Activated T-helper 1 cell treated with anti-CD3 and anti-CD28 coated beads, Interleukin-12 subunit alpha, Interleukin-12 subunit beta, Interleukin-2, Interleukin-4 antibody, amounts not matched to agents 30 ng/mL and 10 ng/mL and 1 ng/mL, durations not matched to agents 14 hours and 24 hours and 36 hours (primary cell): ENCODE measurements at regions of chr17 and their contacts with region 1.

Region 1: DNA sequence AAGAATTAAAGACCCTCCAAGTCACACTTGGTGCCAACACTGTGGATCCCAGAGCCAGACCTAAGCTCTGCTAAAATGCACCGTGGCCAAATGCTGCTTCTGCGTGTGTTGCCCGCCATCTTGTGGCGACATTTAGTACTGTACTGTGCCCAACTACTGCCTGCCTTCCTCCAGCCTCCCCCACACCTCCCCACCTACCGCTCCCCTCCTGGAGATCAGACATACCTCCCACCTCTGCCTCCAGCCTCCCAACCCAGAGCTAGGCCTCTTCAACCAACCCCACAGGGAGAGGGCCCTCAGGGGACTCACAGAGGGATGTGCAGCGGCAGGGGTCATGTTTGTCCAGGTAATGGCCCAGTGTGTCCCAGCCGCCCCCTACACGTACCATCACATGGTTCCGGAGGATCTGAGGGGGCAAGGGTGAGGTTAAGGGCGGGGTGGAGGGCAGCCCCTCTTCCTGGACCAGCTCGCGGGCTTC is 5.5 kb downstream of the GAS2L2 start:
- DNase-seq: peak; percentile 64
- H3K4me3 Mint-ChIP-seq: no peak overlapping the region
- H3K27ac Mint-ChIP-seq: no peak overlapping the region
- H3K4me1 Mint-ChIP-seq: peaks cover 13% of the 10 kb centered on the region
- H3K27me3 Mint-ChIP-seq: peaks cover 37% of the 10 kb centered on the region

Region 2: GRCh38 chr17:34998205-34998604 is 749.4 kb before region 1 on chr17:
- intact Hi-C with region 1: loop called (anchors 1 kb)
- DNase-seq: peak; percentile 77
- H3K4me3 Mint-ChIP-seq: no peak overlapping the region
- H3K27ac Mint-ChIP-seq: peak overlapping the region; percentile 11
- H3K4me1 Mint-ChIP-seq: peaks cover 21% of the 10 kb centered on the region
- H3K27me3 Mint-ChIP-seq: no peaks in the 10 kb centered on the region

Region 3: DNA sequence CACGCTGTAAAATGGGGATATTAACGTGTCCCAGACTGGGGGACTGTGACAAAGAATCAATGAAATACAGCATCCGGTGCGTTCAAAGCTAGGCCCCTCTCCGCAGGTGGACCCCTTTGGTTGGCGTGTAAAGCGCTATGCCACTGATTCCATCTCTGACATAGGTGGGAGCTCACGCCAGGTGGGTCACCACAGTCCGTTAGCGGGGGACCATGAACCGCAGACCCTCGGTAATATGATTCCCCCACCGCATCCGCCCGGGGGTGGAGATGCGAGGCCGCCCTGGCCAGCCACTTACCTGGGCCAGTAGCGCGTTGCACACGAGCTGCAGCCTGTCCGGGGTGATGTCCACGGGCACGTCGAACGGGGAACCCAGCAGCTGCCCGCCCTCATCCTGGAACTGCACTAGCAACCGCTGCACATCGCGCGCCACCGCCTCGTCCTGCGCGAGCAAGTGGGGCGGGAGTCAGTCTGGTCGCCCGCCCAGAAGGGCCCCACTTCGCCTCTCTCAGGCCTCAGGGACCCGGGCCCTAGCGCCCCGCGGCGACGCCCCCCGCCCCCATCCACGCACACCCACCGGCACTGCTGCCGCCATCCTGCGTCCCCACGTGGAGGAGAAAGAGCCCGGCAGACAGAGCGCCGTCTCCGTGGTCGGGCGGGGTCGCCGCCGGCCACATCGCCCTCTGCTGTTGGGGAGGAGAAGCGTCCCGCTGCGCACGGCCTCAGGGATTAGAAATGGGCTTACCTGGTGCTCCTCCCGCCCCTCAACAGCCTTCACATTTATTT is 605.7 kb before region 1 on chr17 and contains the start of gene NLE1:
- intact Hi-C with region 1: loop called (anchors 1 kb)
- DNase-seq: peak; percentile 85
- H3K4me3 Mint-ChIP-seq: peak within 1 kb of the TSS; percentile 86
- H3K27ac Mint-ChIP-seq: peak within 1 kb of the TSS; percentile 80
- H3K4me1 Mint-ChIP-seq: no peaks in the 10 kb centered on the region
- H3K27me3 Mint-ChIP-seq: no peaks in the 10 kb centered on the region
- total RNA-seq, gene NLE1: 51.1 and 54.4 TPM in 2 replicates

Region 4: DNA sequence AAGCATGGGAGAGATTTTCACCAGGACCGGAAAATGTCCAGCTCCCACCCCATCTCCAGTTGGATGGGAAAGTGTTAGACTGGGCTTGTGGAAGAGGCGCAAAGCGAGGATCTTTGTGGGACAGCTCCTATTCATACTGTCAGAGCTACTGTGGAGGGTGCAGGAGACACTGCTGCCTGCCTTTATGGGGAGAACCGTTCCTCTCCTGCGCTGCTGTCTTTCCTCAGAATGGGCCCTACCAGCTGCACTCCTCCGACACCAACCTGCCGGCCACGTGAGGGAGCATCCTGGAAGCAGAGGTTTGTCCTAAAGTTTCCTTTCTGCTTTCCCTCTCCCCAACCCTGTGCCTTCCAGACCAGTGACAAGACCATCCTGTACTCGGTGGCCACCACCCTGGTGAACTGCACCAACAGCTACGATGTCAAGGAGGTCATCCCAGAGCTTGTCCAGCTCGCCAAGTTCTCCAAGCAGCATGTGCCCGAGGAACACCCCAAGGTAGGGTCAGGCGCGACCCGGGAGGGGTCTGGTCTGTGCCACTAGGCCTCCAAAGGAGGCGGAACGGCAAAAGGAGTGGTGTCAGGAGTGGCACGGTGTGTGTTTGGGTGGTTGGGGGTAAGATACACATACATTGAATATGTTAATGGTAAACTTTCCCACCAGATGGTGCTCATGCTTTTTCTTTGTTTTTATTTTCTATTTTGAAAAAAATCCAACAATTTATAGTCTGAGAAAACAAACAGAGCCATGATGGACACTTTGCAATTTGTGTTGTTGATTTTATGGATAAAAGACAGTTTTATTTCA is 576.4 kb before region 1 on chr17:
- intact Hi-C with region 1: loop called (anchors 1 kb)
- DNase-seq: peak; percentile 15
- H3K4me3 Mint-ChIP-seq: peak overlapping the region; percentile 5
- H3K27ac Mint-ChIP-seq: no peak overlapping the region
- H3K4me1 Mint-ChIP-seq: peaks cover 35% of the 10 kb centered on the region
- H3K27me3 Mint-ChIP-seq: peaks cover 7% of the 10 kb centered on the region

Region 5: DNA sequence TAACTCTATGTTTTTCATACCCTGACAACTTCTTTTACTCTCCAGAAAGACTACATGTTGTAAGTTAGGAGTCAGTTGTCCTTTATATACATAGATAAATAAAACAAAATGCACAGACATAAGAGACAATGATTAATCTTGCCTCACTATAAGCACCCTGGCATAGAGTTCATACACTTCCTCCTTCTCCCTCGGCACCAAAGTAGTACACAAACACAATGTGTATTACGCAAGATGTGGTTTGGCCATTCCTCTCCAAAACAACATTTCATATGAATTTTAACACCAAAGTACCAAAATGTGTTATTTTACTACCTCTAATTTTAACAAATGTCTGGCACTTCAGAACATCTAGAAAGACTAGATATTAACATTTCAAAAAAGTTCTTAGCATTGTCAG is 356.9 kb before region 1 on chr17:
- intact Hi-C with region 1: no loop called
- DNase-seq: no peak
- H3K4me3 Mint-ChIP-seq: no peak overlapping the region
- H3K27ac Mint-ChIP-seq: no peak overlapping the region
- H3K4me1 Mint-ChIP-seq: peaks cover 4% of the 10 kb centered on the region
- H3K27me3 Mint-ChIP-seq: peaks cover 9% of the 10 kb centered on the region

Region 6: GRCh38 chr17:35612924-35613521 is 134.6 kb before region 1 on chr17:
- intact Hi-C with region 1: loop called (anchors 1 kb)
- DNase-seq: peak; percentile 7
- H3K4me3 Mint-ChIP-seq: no peak overlapping the region
- H3K27ac Mint-ChIP-seq: no peak overlapping the region
- H3K4me1 Mint-ChIP-seq: peaks cover 7% of the 10 kb centered on the region
- H3K27me3 Mint-ChIP-seq: no peaks in the 10 kb centered on the region

Region 7: GRCh38 chr17:35627417-35627816 is 120.2 kb before region 1 on chr17:
- intact Hi-C with region 1: no loop called
- DNase-seq: no peak
- H3K4me3 Mint-ChIP-seq: no peak overlapping the region
- H3K27ac Mint-ChIP-seq: no peak overlapping the region
- H3K4me1 Mint-ChIP-seq: peaks cover 5% of the 10 kb centered on the region
- H3K27me3 Mint-ChIP-seq: no peaks in the 10 kb centered on the region

Region 8: GRCh38 chr17:35849469-35850348 is 102.1 kb after region 1 on chr17:
- intact Hi-C with region 1: no loop called
- DNase-seq: peak; percentile 49
- H3K4me3 Mint-ChIP-seq: no peak overlapping the region
- H3K27ac Mint-ChIP-seq: peak overlapping the region; percentile 42
- H3K4me1 Mint-ChIP-seq: peaks cover 19% of the 10 kb centered on the region
- H3K27me3 Mint-ChIP-seq: no peaks in the 10 kb centered on the region